ENCODE measurements at regions of chr20 and their contacts with region 1.

Region 1: DNA sequence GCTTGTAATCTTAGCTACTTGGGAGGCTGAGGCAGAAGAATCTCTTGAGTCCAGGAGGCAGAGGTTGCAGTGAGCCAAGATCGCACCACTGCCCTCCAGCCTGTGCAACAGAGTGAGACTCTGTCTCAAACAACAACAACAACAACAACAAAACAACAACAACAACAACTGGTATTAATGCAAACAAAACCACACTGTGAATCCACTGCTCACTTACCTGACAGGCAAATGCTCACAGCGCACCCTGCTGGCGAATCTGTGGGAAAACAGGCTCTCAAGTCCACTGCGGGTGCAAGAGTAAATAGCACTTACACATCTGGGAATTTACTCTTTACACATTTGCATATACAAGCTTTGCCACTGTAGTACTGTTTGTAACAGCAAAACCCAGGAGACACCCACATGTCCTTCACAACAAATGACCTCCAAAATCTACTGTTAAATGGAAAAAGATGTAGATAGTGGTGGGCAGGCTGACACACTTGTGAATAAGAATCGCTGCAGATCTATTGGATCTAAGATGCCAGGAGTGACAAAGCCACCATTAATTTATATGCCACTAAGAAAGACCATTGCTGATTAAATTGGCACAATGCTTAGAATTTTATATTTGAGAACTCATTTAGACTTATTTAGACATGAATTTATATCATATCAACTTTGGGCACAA is 29.3 kb downstream of the NSFL1C start:
- DNase-seq: peak; percentile 67 to 73 (median 69)
- ATAC-seq: peak; percentile 68
- H3K4me3 ChIP-seq: no peak overlapping the region
- H3K27ac ChIP-seq: no peak overlapping the region
- H3K4me1 ChIP-seq: no peaks in the 10 kb centered on the region
- H3K27me3 ChIP-seq: no peaks in the 10 kb centered on the region
- CTCF ChIP-seq: peak; percentile 61 to 89 (median 79)
- POLR2A ChIP-seq: no peak

Region 2: DNA sequence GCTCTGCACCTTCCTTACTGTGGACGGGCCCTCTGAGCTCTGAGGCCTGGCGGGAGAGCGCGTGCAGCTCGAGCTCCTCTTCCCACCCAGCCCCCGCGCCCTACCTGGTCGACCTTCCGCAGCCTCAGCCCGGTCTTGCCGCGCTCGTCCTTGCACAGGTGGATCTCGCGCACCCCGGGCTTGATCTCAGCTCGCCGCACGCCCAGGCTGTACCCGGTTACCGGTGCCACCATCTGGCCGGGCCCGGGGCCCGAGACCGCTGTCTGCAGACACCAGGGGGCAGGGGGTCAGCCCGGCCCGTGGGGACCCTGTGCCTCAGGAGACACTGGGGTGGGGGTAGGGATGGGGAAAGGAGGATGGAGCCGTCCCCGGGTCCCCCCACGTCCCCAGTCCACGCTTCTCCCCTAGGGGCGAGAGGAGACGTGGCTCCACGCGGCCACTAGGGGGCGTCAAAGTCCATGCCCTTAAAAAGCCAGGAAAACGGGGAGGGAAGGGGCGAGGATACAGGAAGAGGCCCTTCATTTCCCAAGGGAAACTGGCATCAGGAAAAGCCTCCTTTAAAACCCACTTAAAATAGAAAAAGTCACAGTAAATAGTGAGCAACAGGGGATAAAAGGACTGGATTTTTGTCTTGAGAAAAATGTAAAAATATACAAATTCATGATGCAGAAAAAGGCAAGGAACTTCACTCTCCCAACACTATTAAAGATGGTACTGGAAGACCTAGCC is 124.0 kb before region 1 on chr20:
- intact Hi-C with region 1: loop called (anchors 5 kb)
- DNase-seq: peak; percentile 73 to 80 (median 74)
- ATAC-seq: peak; percentile 86
- H3K4me3 ChIP-seq: no peak overlapping the region
- H3K27ac ChIP-seq: no peak overlapping the region
- H3K4me1 ChIP-seq: peaks cover 8% of the 10 kb centered on the region
- H3K27me3 ChIP-seq: no peaks in the 10 kb centered on the region
- CTCF ChIP-seq: peak; percentile 86 to 98 (median 94)
- POLR2A ChIP-seq: no peak

Region 3: GRCh38 chr20:1761116-1761515 is 323.7 kb after region 1 on chr20:
- intact Hi-C with region 1: no loop called
- DNase-seq: no peak
- ATAC-seq: no peak
- H3K4me3 ChIP-seq: no peak overlapping the region
- H3K27ac ChIP-seq: no peak overlapping the region
- H3K4me1 ChIP-seq: peaks cover 5% of the 10 kb centered on the region
- H3K27me3 ChIP-seq: no peaks in the 10 kb centered on the region
- CTCF ChIP-seq: no peak
- POLR2A ChIP-seq: no peak

Measured in body of pancreas (tissue), 4 donors.